CD4-positive, alpha-beta memory T cell (primary cell): ENCODE measurements at regions of chr1 and their contacts with region 1.

Region 1: GRCh38 chr1:206469933-206470691 is at the start of gene IKBKE:
- DNase-seq: peak; percentile 44 to 69 (median 47)
- H3K4me3 ChIP-seq: peak within 1 kb of the TSS; percentile 99
- H3K4me3 Mint-ChIP-seq: peak within 1 kb of the TSS; percentile 84 to 97 (median 93)
- H3K27ac ChIP-seq: peak within 1 kb of the TSS; percentile 80
- H3K27ac Mint-ChIP-seq: peak within 1 kb of the TSS; percentile 64 to 95 (median 92)
- H3K4me1 ChIP-seq: peaks cover 86% of the 10 kb centered on the region
- H3K4me1 Mint-ChIP-seq: peaks cover 54 to 91% (median 79%) of the 10 kb centered on the region in 4 donors
- H3K27me3 ChIP-seq: no peaks in the 10 kb centered on the region
- H3K27me3 Mint-ChIP-seq: no peaks in the 10 kb centered on the region
- total RNA-seq, gene IKBKE: 81.8 to 92.3 TPM

Region 2: GRCh38 chr1:206489980-206490770 is 20.1 kb after region 1 on chr1:
- CTCF ChIA-PET with region 1: interaction called, 21 read pairs
- POLR2A ChIA-PET with region 1: interaction called, 3 read pairs
- intact Hi-C with region 1: no loop called
- DNase-seq: peak; percentile 46 to 62 (median 57)
- H3K4me3 ChIP-seq: no peak overlapping the region
- H3K4me3 Mint-ChIP-seq: no peak overlapping the region
- H3K27ac ChIP-seq: no peak overlapping the region
- H3K27ac Mint-ChIP-seq: peak overlapping the region in 4 of 7 donors; percentile 17 to 78 (median 56)
- H3K4me1 ChIP-seq: peaks cover under 1% of the 10 kb centered on the region
- H3K4me1 Mint-ChIP-seq: peaks cover 0 to 5% (median 0%) of the 10 kb centered on the region in 4 donors
- H3K27me3 ChIP-seq: no peaks in the 10 kb centered on the region
- H3K27me3 Mint-ChIP-seq: no peaks in the 10 kb centered on the region

Region 3: GRCh38 chr1:206496131-206496793 is 26.1 kb after region 1 on chr1:
- CTCF ChIA-PET with region 1: interaction called, 21 read pairs
- POLR2A ChIA-PET with region 1: interaction called, 11 read pairs
- intact Hi-C with region 1: no loop called
- DNase-seq: no peak
- H3K4me3 ChIP-seq: no peak overlapping the region
- H3K4me3 Mint-ChIP-seq: no peak overlapping the region
- H3K27ac ChIP-seq: no peak overlapping the region
- H3K27ac Mint-ChIP-seq: peak overlapping the region; percentile 31 to 91 (median 68)
- H3K4me1 ChIP-seq: peaks cover 5% of the 10 kb centered on the region
- H3K4me1 Mint-ChIP-seq: peaks cover 0 to 15% (median 4%) of the 10 kb centered on the region in 4 donors
- H3K27me3 ChIP-seq: no peaks in the 10 kb centered on the region
- H3K27me3 Mint-ChIP-seq: no peaks in the 10 kb centered on the region

Region 4: GRCh38 chr1:206507284-206508129 is 37.4 kb after region 1 on chr1 and contains the start of gene RASSF5:
- CTCF ChIA-PET with region 1: interaction called, 7 read pairs
- POLR2A ChIA-PET with region 1: interaction called, 20 read pairs
- intact Hi-C with region 1: no loop called
- DNase-seq: peak; percentile 76 to 81 (median 78)
- H3K4me3 ChIP-seq: peak within 1 kb of the TSS; percentile 39 to 58
- H3K4me3 Mint-ChIP-seq: peak within 1 kb of the TSS; percentile 80 to 89 (median 82)
- H3K27ac ChIP-seq: no peak within 1 kb of the TSS
- H3K27ac Mint-ChIP-seq: peak within 1 kb of the TSS in 4 of 7 donors; percentile 54 to 67 (median 64)
- H3K4me1 ChIP-seq: peaks cover 45% of the 10 kb centered on the region
- H3K4me1 Mint-ChIP-seq: peaks cover 17 to 55% (median 34%) of the 10 kb centered on the region in 4 donors
- H3K27me3 ChIP-seq: peaks cover 4% of the 10 kb centered on the region
- H3K27me3 Mint-ChIP-seq: peaks cover 6 to 8% of the 10 kb centered on the region in 2 donors
- total RNA-seq, gene RASSF5: 186 to 190 TPM

Region 5: DNA sequence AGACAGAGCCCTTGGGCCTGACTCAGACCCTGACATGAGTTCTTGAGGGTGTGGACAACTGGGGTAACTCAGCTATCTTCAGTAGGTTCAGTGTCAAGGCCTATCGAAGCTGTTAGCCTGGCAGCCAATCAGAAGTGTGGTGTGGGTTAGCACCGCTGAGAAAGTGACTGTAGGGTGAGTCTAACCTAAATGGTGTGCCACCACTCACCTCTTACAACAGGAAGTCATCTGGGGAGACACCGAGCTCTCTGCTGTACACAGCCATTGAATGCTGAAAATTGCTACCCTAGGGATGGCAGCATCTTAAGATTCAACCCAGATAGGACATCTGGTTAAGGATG is 81.8 kb after region 1 on chr1:
- CTCF ChIA-PET with region 1: interaction called, 6 read pairs
- POLR2A ChIA-PET with region 1: interaction called, 18 read pairs
- intact Hi-C with region 1: no loop called
- DNase-seq: peak; percentile 80 to 95 (median 84)
- H3K4me3 ChIP-seq: no peak overlapping the region
- H3K4me3 Mint-ChIP-seq: peak overlapping the region; percentile 49 to 88 (median 72)
- H3K27ac ChIP-seq: peak overlapping the region; percentile 54
- H3K27ac Mint-ChIP-seq: peak overlapping the region; percentile 90 to 99 (median 96)
- H3K4me1 ChIP-seq: peaks cover 59% of the 10 kb centered on the region
- H3K4me1 Mint-ChIP-seq: peaks cover 34 to 65% (median 48%) of the 10 kb centered on the region in 4 donors
- H3K27me3 ChIP-seq: no peaks in the 10 kb centered on the region
- H3K27me3 Mint-ChIP-seq: no peaks in the 10 kb centered on the region

Region 6: GRCh38 chr1:206556750-206557635 is 86.9 kb after region 1 on chr1:
- CTCF ChIA-PET with region 1: interaction called, 6 read pairs
- POLR2A ChIA-PET with region 1: interaction called, 18 read pairs
- intact Hi-C with region 1: no loop called
- DNase-seq: peak; percentile 87 to 93 (median 90)
- H3K4me3 ChIP-seq: peak overlapping the region; percentile 95 to 96
- H3K4me3 Mint-ChIP-seq: peak overlapping the region; percentile 90 to 99 (median 98)
- H3K27ac ChIP-seq: peak overlapping the region; percentile 77
- H3K27ac Mint-ChIP-seq: peak overlapping the region; percentile 93 to 98 (median 96)
- H3K4me1 ChIP-seq: peaks cover 76% of the 10 kb centered on the region
- H3K4me1 Mint-ChIP-seq: peaks cover 49 to 93% (median 63%) of the 10 kb centered on the region in 4 donors
- H3K27me3 ChIP-seq: no peaks in the 10 kb centered on the region
- H3K27me3 Mint-ChIP-seq: no peaks in the 10 kb centered on the region

Region 7: DNA sequence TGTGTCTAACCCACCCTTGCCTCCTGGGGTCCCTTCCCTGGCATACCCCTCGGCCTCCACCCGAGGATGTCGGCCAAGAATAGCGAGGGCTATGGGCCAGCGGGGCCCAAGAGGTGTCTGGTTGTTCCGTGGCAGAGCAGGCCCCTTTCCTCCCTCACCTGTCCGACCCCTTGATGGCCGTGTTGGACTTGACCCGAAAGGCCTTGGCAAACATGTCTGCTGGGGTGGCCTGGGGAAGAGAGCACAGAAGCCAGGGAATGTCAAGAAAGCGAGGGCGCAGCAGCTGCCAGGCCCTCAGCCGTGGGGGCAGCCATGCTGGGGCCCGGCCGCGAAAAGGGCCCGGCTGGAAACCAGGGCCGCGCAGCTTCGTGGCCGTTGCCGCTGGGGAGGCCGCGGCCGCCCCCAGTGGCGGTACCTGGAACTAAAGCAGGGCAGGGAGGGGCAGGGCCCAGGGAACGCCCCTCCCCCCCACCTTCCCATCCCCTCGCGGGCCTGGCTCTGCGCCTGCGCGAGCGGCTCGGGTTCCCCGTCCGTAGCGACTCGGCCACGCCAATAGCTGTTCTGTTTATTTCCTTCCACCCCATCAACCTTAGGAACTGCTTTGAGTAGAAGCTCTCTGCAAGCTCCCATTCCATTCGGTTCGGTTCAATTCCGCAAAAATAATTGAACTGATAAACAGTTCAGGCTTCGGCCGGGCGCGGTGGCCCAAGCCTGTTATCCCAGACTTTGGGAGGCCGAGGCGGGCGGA is 142.2 kb after region 1 on chr1 and contains the start of gene EIF2D:
- CTCF ChIA-PET with region 1: interaction called, 13 read pairs
- POLR2A ChIA-PET with region 1: interaction called, 16 read pairs
- intact Hi-C with region 1: no loop called
- DNase-seq: peak; percentile 90 to 96 (median 92)
- H3K4me3 ChIP-seq: peak within 1 kb of the TSS; percentile 62 to 77
- H3K4me3 Mint-ChIP-seq: peak within 1 kb of the TSS; percentile 91 to 95 (median 93)
- H3K27ac ChIP-seq: peak within 1 kb of the TSS; percentile 80
- H3K27ac Mint-ChIP-seq: peak within 1 kb of the TSS; percentile 87 to 98 (median 96)
- H3K4me1 ChIP-seq: peaks cover 12% of the 10 kb centered on the region
- H3K4me1 Mint-ChIP-seq: peaks cover 12 to 34% (median 21%) of the 10 kb centered on the region in 4 donors
- H3K27me3 ChIP-seq: no peaks in the 10 kb centered on the region
- H3K27me3 Mint-ChIP-seq: no peaks in the 10 kb centered on the region
- total RNA-seq, gene EIF2D: 53.5 to 54.5 TPM

Region 8: GRCh38 chr1:207259391-207259790 is 789.3 kb after region 1 on chr1:
- CTCF ChIA-PET with region 1: no interaction called
- POLR2A ChIA-PET with region 1: no interaction called
- intact Hi-C with region 1: no loop called
- DNase-seq: no peak
- H3K4me3 ChIP-seq: no peak overlapping the region
- H3K4me3 Mint-ChIP-seq: no peak overlapping the region
- H3K27ac ChIP-seq: no peak overlapping the region
- H3K27ac Mint-ChIP-seq: no peak overlapping the region
- H3K4me1 ChIP-seq: no peaks in the 10 kb centered on the region
- H3K4me1 Mint-ChIP-seq: peaks cover 0 to 3% (median 0%) of the 10 kb centered on the region in 4 donors
- H3K27me3 ChIP-seq: no peaks in the 10 kb centered on the region
- H3K27me3 Mint-ChIP-seq: peaks cover 1 to 4% of the 10 kb centered on the region in 2 donors